SK-N-SH (cell line): ENCODE measurements at regions of chr12 and their contacts with region 1.

Region 1: DNA sequence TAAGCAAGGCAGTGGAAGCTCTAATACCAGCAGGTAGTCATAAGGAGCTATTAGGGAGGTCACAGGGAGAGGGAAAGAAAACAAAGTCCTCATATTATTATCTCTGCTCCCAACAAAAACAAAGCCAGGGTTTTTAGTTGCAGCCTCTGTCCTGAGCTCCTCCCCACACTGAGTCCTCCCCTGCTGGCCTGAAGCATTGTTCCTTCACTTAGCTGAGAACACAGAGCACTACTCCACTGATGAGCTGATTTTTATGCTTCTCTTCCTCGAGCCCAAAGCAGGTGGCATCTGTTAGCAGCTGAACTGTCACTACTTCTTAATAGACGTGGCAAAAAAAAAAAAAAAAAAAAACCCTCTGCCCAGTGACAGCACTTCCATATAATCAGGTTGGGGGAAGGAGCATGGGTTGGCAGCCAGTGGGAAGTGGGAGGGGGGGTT is 10.5 kb upstream of the STAC3 start:
- DNase-seq: no peak
- H3K4me3 ChIP-seq: no peak overlapping the region
- H3K27ac ChIP-seq: no peak overlapping the region; a peak in 1 of 4 replicates
- H3K4me1 ChIP-seq: peaks cover 0 to 11% of the 10 kb centered on the region in 2 experiments; a peak in 1 of 4 replicates
- H3K27me3 ChIP-seq: no peaks in the 10 kb centered on the region
- CTCF ChIP-seq: no peak
- EP300 ChIP-seq: no peak
- RAD21 ChIP-seq: no peak

Region 2: GRCh38 chr12:57248934-57249742 is 12.3 kb before region 1 on chr12:
- CTCF ChIA-PET with region 1: interaction called, 103 read pairs
- POLR2A ChIA-PET with region 1: no interaction called
- DNase-seq: no peak
- H3K4me3 ChIP-seq: no peak overlapping the region
- H3K27ac ChIP-seq: no peak overlapping the region
- H3K4me1 ChIP-seq: no peaks in the 10 kb centered on the region; a peak in 1 of 4 replicates
- H3K27me3 ChIP-seq: no peaks in the 10 kb centered on the region
- CTCF ChIP-seq: no peak
- EP300 ChIP-seq: no peak
- RAD21 ChIP-seq: no peak

Region 3: DNA sequence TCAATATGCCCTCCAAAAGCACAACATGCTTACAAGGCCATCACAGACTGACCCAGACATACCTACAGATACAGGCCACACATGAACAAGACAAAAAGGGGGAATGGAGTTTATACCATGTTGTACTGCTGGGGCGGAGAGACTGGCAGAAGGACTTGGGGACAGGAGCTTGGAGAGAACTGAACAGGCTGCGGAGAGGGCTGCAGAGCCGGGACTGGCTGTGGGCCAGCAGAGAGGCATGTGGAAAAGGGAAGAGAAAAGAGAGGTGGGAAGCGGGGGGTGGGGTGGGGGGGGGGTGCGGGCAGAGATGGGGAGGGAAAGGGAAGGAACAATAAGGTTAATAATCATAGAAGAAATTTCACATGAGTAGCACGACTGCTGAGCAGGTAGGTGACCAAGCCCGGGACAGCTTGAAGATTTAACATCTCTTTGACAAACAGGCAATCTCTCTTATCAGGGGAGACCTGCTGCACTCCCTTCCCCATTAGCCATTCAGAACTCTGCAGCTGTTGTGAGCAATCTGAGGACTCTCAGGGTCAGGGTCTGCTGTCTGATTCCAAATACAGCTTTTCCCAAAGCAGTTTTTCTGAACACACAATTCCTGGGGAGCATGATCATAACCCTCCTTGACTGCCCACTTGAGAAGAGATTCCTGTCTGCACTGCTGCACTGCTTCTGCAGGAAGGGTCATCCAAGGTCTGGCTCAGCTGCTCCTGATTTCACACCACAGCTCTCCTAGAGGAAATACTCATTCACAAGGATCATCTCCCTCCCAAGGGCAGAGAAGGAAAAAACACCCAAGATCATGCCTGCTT is 11.1 kb after region 1 on chr12:
- CTCF ChIA-PET with region 1: interaction called, 18 read pairs
- POLR2A ChIA-PET with region 1: interaction called, 3 read pairs
- DNase-seq: peak; percentile 49
- H3K4me3 ChIP-seq: no peak overlapping the region
- H3K27ac ChIP-seq: peak overlapping the region; percentile 30 to 64; a peak in 2 of 4 replicates
- H3K4me1 ChIP-seq: peaks cover 7 to 12% of the 10 kb centered on the region in 2 experiments; a peak in 2 of 4 replicates
- H3K27me3 ChIP-seq: no peaks in the 10 kb centered on the region
- CTCF ChIP-seq: no peak
- EP300 ChIP-seq: no peak
- RAD21 ChIP-seq: no peak